Endothelial cell of umbilical vein (primary cell): ENCODE measurements at regions of chr2 and their contacts with region 1.

Region 1: GRCh38 chr2:98385050-98385699 is 38.9 kb downstream of the CNGA3 start:
- DNase-seq: peak; percentile 71
- H3K4me3 ChIP-seq: no peak overlapping the region
- H3K27ac ChIP-seq: no peak overlapping the region
- H3K4me1 ChIP-seq: no peaks in the 10 kb centered on the region
- H3K27me3 ChIP-seq: peaks cover 1 to 7% of the 10 kb centered on the region in 2 experiments
- CTCF ChIP-seq: peak; percentile 97 to 98
- POLR2A ChIP-seq: no peak

Region 2: DNA sequence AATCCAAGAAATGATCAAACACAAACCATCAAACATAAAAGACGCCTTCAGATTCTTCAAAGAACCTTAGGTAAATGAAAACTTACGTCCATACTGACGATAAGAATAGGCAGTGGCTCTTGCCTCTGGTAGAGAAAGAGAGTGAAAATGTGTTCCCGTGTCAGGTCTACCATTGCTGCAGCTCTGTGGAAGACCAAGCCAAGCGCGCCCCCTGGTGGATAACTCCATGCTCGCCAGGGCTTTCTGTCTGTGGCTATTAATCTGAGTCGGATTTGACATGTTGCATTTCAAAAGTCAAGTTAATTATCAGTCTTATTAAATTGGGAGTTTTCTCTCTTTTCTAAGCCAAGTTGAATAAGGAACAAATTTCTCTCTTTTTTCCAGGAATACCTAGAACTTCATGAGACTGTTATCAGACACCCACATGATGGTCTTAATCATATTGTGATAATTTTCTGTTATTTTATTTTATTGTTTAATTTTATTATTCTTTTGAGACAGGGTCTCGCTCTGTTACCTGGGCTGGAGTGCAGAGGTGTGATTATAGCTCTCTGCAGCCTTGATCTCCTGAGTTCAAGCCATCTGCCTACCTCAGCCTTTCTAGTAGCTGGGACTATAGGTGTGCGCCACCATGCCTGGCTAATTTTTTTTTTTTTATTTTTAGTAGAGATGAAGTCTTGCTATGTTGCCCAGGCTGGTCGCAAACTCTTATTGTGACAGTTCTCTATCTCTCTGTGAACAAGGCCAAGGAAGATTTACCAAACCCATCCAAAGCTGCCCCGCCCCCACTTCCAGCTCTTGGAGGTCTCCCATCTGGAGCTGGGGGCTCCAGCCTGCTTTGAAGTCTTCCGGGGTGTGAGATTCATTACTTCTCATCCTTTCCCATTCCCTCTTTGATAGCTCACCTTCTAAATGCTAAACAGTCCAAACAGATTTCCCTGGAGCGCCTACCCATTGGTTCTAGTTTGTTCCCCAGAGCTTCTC is 687.6 kb before region 1 on chr2:
- CTCF ChIA-PET with region 1: interaction called, 116 read pairs
- POLR2A ChIA-PET with region 1: no interaction called
- dilution Hi-C with region 1: no loop called
- intact Hi-C with region 1: loop called (anchors 1 kb)
- DNase-seq: peak; percentile 85
- H3K4me3 ChIP-seq: no peak overlapping the region
- H3K27ac ChIP-seq: no peak overlapping the region
- H3K4me1 ChIP-seq: no peaks in the 10 kb centered on the region
- H3K27me3 ChIP-seq: peaks cover 2 to 3% of the 10 kb centered on the region in 2 experiments
- CTCF ChIP-seq: peak; percentile 83 to 86
- POLR2A ChIP-seq: no peak

Region 3: DNA sequence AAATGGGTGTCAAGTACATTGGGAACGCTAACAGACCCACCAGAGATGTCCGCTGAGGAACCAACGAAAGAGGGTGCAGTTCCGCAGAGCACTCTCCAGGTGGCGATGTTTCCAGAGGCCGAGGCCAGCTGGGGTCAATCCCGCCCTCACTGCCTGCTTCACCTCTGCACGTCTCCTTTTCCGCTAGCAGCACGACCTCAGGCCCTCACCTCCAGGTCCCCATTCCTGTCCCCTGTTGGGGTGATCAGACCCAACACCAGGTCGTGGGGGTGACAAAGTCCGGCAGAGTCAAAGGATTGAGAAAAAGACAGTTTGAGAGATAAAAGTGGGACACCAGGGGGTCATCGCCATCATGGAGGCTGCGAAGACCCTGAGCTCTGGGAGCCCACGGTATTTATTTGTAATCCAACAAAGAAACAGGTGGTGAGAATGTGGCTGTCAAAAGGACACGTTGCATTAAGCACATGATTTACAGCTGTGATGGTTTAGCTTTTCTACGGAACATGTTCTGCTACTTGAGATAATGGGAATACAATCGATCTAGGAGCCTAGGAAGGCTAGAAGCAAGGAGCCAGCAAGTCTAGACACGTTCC is 644.5 kb before region 1 on chr2:
- CTCF ChIA-PET with region 1: interaction called, 39 read pairs
- POLR2A ChIA-PET with region 1: no interaction called
- dilution Hi-C with region 1: no loop called
- intact Hi-C with region 1: no loop called
- DNase-seq: peak; percentile 23
- H3K4me3 ChIP-seq: no peak overlapping the region
- H3K27ac ChIP-seq: no peak overlapping the region
- H3K4me1 ChIP-seq: peaks cover 7% of the 10 kb centered on the region
- H3K27me3 ChIP-seq: no peaks in the 10 kb centered on the region
- CTCF ChIP-seq: peak; percentile 69 to 82
- POLR2A ChIP-seq: no peak

Region 4: DNA sequence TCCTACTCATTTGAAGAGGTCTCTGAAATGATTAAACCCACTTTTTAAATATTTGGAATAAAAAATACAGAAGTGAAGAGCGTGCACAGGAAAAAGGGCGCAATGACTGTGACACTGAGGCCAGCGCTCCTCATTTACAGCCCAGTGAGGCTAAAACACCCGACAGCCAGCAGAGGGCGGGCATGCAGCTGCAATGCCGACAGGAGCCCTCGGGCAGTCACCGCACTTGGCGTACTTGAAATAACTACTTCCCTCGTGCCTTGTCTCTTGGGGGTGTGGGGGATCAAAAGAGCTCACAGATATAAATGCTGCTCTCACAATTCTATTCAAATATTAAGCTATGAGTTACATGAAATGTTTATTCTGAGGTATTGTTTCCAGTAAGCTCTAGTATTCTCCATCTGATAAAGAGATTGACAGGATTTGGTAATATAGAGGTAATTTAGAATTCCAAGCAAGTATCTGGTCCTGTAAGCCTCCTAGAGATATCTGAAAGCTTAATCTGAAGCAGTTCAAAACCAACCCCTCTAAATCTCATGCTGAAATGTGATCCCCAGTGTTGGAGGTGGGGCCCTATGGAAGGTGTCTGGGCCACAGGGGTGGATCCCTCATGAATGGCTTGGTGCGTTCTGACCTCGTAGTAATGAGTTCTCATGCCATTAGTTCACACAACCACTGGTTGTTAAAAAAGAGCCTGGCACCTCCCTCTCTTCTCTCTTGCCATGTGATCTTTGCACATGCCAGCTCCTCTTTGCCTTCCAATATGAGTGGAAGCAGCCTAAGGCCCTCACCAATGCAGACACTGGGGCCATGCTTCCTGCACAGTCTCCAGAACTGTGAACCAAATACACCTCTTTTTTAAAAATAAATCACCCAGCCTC is 578.2 kb before region 1 on chr2:
- CTCF ChIA-PET with region 1: interaction called, 40 read pairs
- POLR2A ChIA-PET with region 1: no interaction called
- dilution Hi-C with region 1: no loop called
- intact Hi-C with region 1: loop called (anchors 1 kb)
- DNase-seq: peak; percentile 67
- H3K4me3 ChIP-seq: no peak overlapping the region
- H3K27ac ChIP-seq: no peak overlapping the region
- H3K4me1 ChIP-seq: no peaks in the 10 kb centered on the region
- H3K27me3 ChIP-seq: no peaks in the 10 kb centered on the region
- CTCF ChIP-seq: peak; percentile 86 to 95
- POLR2A ChIP-seq: no peak

Region 5: DNA sequence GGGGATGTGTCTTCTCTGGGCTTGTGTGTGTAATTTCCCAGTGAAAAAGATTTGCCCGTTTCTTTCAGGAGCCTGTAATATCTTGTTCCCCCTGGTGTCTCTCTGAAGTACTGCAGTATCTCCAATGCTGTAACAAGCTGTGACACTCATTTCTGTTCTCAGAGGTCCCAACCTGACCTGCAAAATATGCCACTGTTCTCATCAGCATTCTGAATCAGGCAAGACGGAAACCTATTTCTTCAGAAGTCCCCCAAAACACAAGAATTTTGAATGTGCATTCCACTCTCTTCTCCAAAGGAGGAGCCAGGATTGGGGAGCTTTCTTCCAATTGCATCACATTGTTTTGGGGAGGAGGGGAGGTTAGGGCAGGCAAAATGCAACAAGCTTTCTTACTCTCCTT is 115.9 kb before region 1 on chr2:
- CTCF ChIA-PET with region 1: interaction called, 23 read pairs
- POLR2A ChIA-PET with region 1: no interaction called
- dilution Hi-C with region 1: no loop called
- intact Hi-C with region 1: no loop called
- DNase-seq: peak; percentile 27
- H3K4me3 ChIP-seq: no peak overlapping the region
- H3K27ac ChIP-seq: no peak overlapping the region
- H3K4me1 ChIP-seq: no peaks in the 10 kb centered on the region
- H3K27me3 ChIP-seq: peaks cover 2 to 4% of the 10 kb centered on the region in 2 experiments
- CTCF ChIP-seq: peak; percentile 44 to 60
- POLR2A ChIP-seq: no peak

Region 6: GRCh38 chr2:98359986-98360385 is 25.2 kb before region 1 on chr2:
- CTCF ChIA-PET with region 1: no interaction called
- POLR2A ChIA-PET with region 1: no interaction called
- dilution Hi-C with region 1: no loop called
- intact Hi-C with region 1: no loop called
- DNase-seq: no peak
- H3K4me3 ChIP-seq: no peak overlapping the region
- H3K27ac ChIP-seq: no peak overlapping the region
- H3K4me1 ChIP-seq: no peaks in the 10 kb centered on the region
- H3K27me3 ChIP-seq: peaks cover 2 to 17% of the 10 kb centered on the region in 2 experiments
- CTCF ChIP-seq: no peak
- POLR2A ChIP-seq: no peak